ENCODE measurements at regions of chr7 and their contacts with region 1.

Region 1: DNA sequence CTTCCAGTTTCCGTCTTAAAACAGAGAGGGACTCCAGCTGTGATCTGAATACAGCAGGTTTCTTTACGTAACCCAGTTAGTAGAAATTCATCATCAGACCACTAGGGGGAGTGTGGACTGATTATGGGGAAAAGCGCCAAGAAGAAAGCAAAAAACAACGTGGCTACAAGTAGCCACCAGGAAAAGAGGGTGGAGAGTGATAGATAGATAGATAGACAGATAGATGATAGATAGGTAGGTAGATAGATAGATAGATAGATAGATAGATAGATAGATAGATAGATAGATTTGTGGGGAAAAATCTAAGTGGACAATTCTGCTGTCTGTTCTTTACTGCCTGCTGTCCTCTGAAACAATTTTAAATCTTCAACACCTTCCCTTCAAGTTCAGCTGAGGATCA is 12.7 kb upstream of the AKR1B10 start:
- DNase-seq: no peak
- H3K4me3 Mint-ChIP-seq: no peak overlapping the region
- H3K27ac Mint-ChIP-seq: no peak overlapping the region
- H3K4me1 Mint-ChIP-seq: peaks cover 16% of the 10 kb centered on the region
- H3K27me3 Mint-ChIP-seq: peaks cover 12% of the 10 kb centered on the region

Region 2: DNA sequence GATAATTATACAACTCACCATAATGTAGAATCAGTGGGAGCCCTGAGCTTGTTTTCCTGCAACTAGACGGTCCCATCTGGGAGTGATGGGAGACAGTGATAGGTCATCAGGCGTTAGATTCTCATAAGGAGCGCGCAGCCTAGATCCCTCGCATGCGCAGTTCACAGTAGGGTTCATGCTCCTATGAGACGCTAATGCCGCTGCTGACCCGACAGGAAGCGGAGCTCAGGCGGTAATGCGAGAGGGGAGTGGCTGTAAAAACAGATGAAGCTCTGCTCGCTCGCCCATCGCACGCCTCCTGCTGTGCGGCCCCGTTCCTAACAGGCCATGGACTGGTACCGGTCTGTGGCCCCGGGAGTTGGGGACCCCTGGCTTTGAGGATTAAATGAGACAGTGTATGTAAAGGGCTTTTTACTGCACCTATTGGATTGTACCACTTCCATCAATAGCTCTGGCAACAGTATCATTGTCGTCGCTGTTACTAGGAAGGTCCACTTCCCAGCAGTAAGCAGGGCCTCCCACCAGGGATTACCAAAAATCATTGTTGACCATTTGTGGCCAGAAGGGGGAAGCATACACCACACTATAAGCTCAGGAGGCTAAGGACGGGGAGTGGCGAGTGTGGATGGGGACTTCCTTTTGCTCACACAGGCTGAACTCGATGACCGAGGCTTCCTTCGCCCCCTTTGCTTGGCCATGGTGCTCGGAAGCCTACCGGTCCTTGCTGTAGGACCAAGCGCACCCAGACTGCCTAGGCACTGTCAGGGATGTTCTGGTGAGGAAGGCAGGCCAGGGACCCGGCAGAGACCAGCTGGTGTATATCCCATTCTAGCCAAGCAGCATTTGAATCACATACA is 82.1 kb before region 1 on chr7:
- intact Hi-C with region 1: loop called (anchors 1 kb)
- DNase-seq: peak; percentile 61
- H3K4me3 Mint-ChIP-seq: peak overlapping the region; percentile 78
- H3K27ac Mint-ChIP-seq: peak overlapping the region; percentile 79
- H3K4me1 Mint-ChIP-seq: peaks cover 23% of the 10 kb centered on the region
- H3K27me3 Mint-ChIP-seq: peaks cover 3% of the 10 kb centered on the region

Region 3: DNA sequence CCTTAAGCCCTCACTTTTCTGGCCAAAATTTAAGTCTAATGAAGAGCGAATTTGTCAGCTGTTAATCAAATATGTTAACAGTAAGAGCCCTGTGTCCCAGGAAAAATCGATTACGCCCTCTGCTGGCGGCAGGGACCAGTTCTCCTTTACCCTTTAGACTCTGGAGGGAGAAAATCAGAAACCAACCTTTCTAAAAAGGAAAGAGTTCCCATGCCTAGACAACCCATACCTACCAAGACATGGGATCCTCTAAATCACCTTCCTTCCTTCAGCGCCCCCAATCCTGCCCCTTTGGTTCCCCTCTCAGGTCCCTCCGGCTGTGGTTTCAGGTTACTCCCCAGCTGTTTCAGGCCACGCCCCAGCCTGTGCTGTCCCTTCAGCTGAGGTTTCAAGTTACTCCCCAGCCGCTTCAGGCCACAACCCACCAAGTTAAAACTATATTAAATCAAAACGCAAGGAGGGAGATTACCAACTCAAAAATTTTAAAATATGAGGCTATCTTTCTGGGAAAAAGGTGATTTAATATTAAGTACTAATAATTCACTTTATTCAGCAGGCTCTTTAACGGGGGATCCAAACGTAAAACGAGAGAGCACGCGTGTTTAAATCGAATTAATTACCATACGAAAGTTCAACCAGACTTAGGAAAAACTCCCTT is 32.9 kb after region 1 on chr7:
- intact Hi-C with region 1: loop called (anchors 2 kb)
- DNase-seq: peak; percentile 32
- H3K4me3 Mint-ChIP-seq: no peak overlapping the region
- H3K27ac Mint-ChIP-seq: no peak overlapping the region
- H3K4me1 Mint-ChIP-seq: peaks cover 12% of the 10 kb centered on the region
- H3K27me3 Mint-ChIP-seq: peaks cover 11% of the 10 kb centered on the region

Region 4: GRCh38 chr7:134605973-134606923 is 91.6 kb after region 1 on chr7:
- intact Hi-C with region 1: loop called (anchors 1 kb)
- DNase-seq: peak; percentile 27
- H3K4me3 Mint-ChIP-seq: peak overlapping the region; percentile 67
- H3K27ac Mint-ChIP-seq: peak overlapping the region; percentile 27
- H3K4me1 Mint-ChIP-seq: peaks cover 11% of the 10 kb centered on the region
- H3K27me3 Mint-ChIP-seq: peaks cover 33% of the 10 kb centered on the region

Region 5: DNA sequence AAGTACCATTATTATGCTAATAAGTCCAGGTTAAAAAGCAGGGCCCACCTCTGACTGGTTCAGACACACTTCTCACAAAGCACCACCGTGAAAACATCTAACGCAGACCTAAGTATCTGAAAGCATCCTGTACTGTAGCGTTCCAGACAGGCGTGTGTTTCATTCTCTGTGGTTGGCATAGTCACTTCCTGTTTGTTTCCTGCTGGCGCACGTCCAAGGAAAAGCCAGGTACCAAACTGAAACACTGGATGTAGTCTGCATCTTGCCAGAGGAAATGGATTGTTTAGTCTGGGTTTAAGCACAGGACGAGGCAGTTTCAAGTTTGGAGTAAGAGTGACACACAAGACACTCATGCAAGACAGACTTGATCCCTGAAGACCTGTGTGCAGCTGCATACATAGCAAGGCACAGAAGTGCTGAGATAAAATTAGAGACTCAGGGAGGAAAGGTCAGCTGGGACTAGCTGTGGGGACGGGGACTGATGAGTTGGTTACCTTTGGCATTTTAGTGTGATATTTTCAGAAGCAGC is 155.2 kb after region 1 on chr7:
- intact Hi-C with region 1: no loop called
- DNase-seq: peak; percentile 26
- H3K4me3 Mint-ChIP-seq: peak overlapping the region; percentile 47
- H3K27ac Mint-ChIP-seq: peak overlapping the region; percentile 33
- H3K4me1 Mint-ChIP-seq: peaks cover 34% of the 10 kb centered on the region
- H3K27me3 Mint-ChIP-seq: no peaks in the 10 kb centered on the region